ENCODE measurements at regions of chr20 and their contacts with region 1.

Region 1: DNA sequence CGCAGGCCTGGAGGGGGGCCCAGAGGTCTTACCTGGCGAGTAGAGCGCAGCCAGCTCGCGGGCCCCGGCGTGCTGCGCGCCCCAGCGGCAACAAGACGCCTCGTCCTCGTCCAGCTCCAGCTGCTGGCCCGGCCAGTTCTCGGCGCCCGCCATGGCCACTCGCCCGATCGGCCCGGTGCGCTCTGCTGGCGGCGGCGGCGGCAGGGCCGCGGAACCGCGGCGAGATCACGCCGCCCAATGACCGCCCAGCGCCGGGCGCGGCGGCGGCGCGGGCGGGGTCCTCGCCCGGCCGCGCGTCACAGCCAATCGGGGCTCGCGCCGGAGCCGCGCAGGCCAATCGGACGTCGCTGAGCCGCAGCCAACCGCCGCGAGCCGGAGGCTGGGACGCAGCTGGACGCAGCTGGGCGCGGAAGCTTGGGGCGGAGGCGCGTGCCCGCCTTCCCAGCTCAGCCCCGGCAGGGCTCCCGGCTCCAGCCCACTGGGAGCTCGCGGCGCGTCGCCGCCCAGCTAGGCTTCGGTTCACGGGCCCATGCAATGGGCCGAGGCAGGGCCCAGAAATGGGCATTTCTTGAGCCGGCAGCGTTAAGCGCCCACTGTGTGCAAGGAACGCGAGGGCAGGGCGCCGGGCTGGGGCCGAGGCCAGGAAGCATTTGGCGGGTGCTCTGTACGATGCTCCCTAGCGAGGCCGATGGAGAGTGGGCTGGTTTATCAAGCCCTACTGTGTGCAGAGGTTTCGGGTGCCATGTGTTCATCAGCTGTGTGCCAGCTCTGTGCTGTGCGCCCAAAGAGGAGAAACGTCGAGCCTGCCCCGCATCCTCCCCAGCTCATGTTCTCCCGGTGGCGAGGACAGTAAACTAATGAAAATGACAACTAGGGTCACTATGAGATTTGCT is at the start of gene PEDS1:
- DNase-seq: peak; percentile 92
- H3K4me3 ChIP-seq: peak within 1 kb of the TSS; percentile 96
- H3K27ac ChIP-seq: no peak within 1 kb of the TSS
- H3K4me1 ChIP-seq: peaks cover 20% of the 10 kb centered on the region
- CTCF ChIP-seq: no peak
- total RNA-seq, gene PEDS1: 12.0 and 25.9 TPM in 2 replicates

Region 2: GRCh38 chr20:49936153-49937027 is 217.3 kb before region 1 on chr20 and contains the start of gene RNF114:
- CTCF ChIA-PET with region 1: no interaction called
- POLR2A ChIA-PET with region 1: no interaction called
- intact Hi-C with region 1: loop called (anchors 5 kb)
- DNase-seq: peak; percentile 96
- H3K4me3 ChIP-seq: peak within 1 kb of the TSS; percentile 86
- H3K27ac ChIP-seq: peak within 1 kb of the TSS; percentile 41
- H3K4me1 ChIP-seq: peaks cover 52% of the 10 kb centered on the region
- CTCF ChIP-seq: no peak
- total RNA-seq, gene RNF114: 48.4 and 51.9 TPM in 2 replicates

Region 3: GRCh38 chr20:50115591-50116372 is 37.9 kb before region 1 on chr20:
- CTCF ChIA-PET with region 1: interaction called, 6 read pairs
- POLR2A ChIA-PET with region 1: interaction called, 32 read pairs
- intact Hi-C with region 1: no loop called
- DNase-seq: peak; percentile 93
- H3K4me3 ChIP-seq: peak overlapping the region; percentile 83
- H3K27ac ChIP-seq: peak overlapping the region; percentile 22
- H3K4me1 ChIP-seq: peaks cover 37% of the 10 kb centered on the region
- CTCF ChIP-seq: no peak